Activated CD4-positive, alpha-beta T cell treated with anti-CD3 and anti-CD28 coated beads for 36 hours (primary cell): ENCODE measurements at regions of chr19 and their contacts with region 1.

Region 1: GRCh38 chr19:3035542-3036118 is 6.5 kb upstream of the TLE2 start:
- DNase-seq: peak; percentile 97
- ATAC-seq: peak; percentile 94
- H3K4me3 Mint-ChIP-seq: peak overlapping the region; percentile 83
- H3K27ac Mint-ChIP-seq: peak overlapping the region; percentile 96
- H3K4me1 Mint-ChIP-seq: peaks cover 19% of the 10 kb centered on the region
- H3K27me3 Mint-ChIP-seq: no peaks in the 10 kb centered on the region

Region 2: GRCh38 chr19:2739602-2740313 is 295.9 kb before region 1 on chr19 and contains the start of gene SLC39A3:
- CTCF ChIA-PET with region 1: no interaction called
- POLR2A ChIA-PET with region 1: no interaction called
- intact Hi-C with region 1: loop called in 1 of 2 experiments (anchors 1 kb)
- DNase-seq: peak; percentile 99
- ATAC-seq: peak; percentile 100
- H3K4me3 Mint-ChIP-seq: peak within 1 kb of the TSS; percentile 95
- H3K27ac Mint-ChIP-seq: peak within 1 kb of the TSS; percentile 70
- H3K4me1 Mint-ChIP-seq: peaks cover 14% of the 10 kb centered on the region
- H3K27me3 Mint-ChIP-seq: peaks cover 8% of the 10 kb centered on the region
- total RNA-seq, gene SLC39A3: 26.6 to 46.0 TPM

Region 3: GRCh38 chr19:2944775-2945574 is 90.7 kb before region 1 on chr19 and contains the start of gene ZNF77:
- CTCF ChIA-PET with region 1: interaction called, 23 read pairs
- POLR2A ChIA-PET with region 1: no interaction called
- intact Hi-C with region 1: loop called in 1 of 2 experiments (anchors 1 kb)
- DNase-seq: peak; percentile 99
- ATAC-seq: peak; percentile 100
- H3K4me3 Mint-ChIP-seq: peak within 1 kb of the TSS; percentile 83
- H3K27ac Mint-ChIP-seq: peak within 1 kb of the TSS; percentile 97
- H3K4me1 Mint-ChIP-seq: peaks cover 34% of the 10 kb centered on the region
- H3K27me3 Mint-ChIP-seq: no peaks in the 10 kb centered on the region
- total RNA-seq, gene ZNF77: 4.3 to 4.8 TPM

Region 4: GRCh38 chr19:3053218-3053699 is 17.6 kb after region 1 on chr19:
- CTCF ChIA-PET with region 1: interaction called, 9 read pairs
- POLR2A ChIA-PET with region 1: interaction called, 12 read pairs
- intact Hi-C with region 1: no loop called
- DNase-seq: no peak
- ATAC-seq: no peak
- H3K4me3 Mint-ChIP-seq: no peak overlapping the region
- H3K27ac Mint-ChIP-seq: no peak overlapping the region
- H3K4me1 Mint-ChIP-seq: peaks cover 29% of the 10 kb centered on the region
- H3K27me3 Mint-ChIP-seq: no peaks in the 10 kb centered on the region

Region 5: DNA sequence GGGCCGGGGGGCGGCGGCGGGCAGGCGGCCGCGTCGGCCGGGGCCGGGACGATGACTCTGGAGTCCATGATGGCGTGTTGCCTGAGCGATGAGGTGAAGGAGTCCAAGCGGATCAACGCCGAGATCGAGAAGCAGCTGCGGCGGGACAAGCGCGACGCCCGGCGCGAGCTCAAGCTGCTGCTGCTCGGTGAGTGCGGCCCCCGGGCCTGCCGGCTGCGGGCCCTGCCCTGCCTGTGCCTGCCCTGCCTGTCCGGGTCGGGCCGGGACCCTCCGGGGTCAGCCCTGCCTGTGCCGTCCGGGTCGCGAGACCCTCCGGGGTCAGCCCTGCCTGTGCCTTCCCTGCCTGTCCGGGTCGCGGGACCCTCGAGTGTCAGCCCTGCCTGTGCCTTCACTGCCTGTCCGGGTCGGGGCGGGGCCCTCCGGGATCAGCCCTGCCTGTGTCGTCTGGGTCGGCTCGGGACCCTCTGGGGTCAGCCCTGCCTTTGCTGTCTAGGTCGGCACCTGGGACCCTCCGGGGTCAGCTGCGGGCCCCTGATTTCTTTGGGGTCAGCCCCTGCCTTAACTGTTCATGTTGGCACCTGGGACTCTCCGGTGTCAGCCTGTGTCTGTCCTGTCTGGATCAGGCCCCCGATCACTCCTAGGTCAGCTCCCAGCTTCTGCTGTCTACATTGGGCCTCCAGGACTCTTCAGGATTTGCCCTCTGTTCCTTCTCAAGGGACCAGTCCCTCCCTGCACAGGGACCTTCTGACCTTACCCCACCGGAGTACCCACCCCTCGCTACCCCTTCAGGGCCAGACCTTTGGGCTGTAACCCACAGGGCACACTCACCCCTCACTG is 59.2 kb after region 1 on chr19:
- CTCF ChIA-PET with region 1: interaction called, 3 read pairs
- POLR2A ChIA-PET with region 1: no interaction called
- intact Hi-C with region 1: loop called in 1 of 2 experiments (anchors 1 kb)
- DNase-seq: peak; percentile 68
- ATAC-seq: peak; percentile 45
- H3K4me3 Mint-ChIP-seq: peak overlapping the region; percentile 74
- H3K27ac Mint-ChIP-seq: no peak overlapping the region
- H3K4me1 Mint-ChIP-seq: peaks cover 26% of the 10 kb centered on the region
- H3K27me3 Mint-ChIP-seq: no peaks in the 10 kb centered on the region

Region 6: GRCh38 chr19:3284759-3285646 is 249.4 kb after region 1 on chr19:
- CTCF ChIA-PET with region 1: no interaction called
- POLR2A ChIA-PET with region 1: no interaction called
- intact Hi-C with region 1: loop called in 1 of 2 experiments (anchors 1 kb)
- DNase-seq: peak; percentile 94
- ATAC-seq: peak; percentile 91
- H3K4me3 Mint-ChIP-seq: peak overlapping the region; percentile 51
- H3K27ac Mint-ChIP-seq: no peak overlapping the region
- H3K4me1 Mint-ChIP-seq: peaks cover 12% of the 10 kb centered on the region
- H3K27me3 Mint-ChIP-seq: peaks cover 19% of the 10 kb centered on the region

Region 7: GRCh38 chr19:3500429-3501130 is 464.9 kb after region 1 on chr19 and contains the start of gene DOHH:
- CTCF ChIA-PET with region 1: no interaction called
- POLR2A ChIA-PET with region 1: no interaction called
- intact Hi-C with region 1: loop called in 1 of 2 experiments (anchors 2 kb)
- DNase-seq: peak; percentile 98
- ATAC-seq: peak; percentile 95
- H3K4me3 Mint-ChIP-seq: peak within 1 kb of the TSS; percentile 91
- H3K27ac Mint-ChIP-seq: peak within 1 kb of the TSS; percentile 97
- H3K4me1 Mint-ChIP-seq: peaks cover 26% of the 10 kb centered on the region
- H3K27me3 Mint-ChIP-seq: no peaks in the 10 kb centered on the region
- total RNA-seq, gene DOHH: 9.6 to 15.4 TPM

Region 8: DNA sequence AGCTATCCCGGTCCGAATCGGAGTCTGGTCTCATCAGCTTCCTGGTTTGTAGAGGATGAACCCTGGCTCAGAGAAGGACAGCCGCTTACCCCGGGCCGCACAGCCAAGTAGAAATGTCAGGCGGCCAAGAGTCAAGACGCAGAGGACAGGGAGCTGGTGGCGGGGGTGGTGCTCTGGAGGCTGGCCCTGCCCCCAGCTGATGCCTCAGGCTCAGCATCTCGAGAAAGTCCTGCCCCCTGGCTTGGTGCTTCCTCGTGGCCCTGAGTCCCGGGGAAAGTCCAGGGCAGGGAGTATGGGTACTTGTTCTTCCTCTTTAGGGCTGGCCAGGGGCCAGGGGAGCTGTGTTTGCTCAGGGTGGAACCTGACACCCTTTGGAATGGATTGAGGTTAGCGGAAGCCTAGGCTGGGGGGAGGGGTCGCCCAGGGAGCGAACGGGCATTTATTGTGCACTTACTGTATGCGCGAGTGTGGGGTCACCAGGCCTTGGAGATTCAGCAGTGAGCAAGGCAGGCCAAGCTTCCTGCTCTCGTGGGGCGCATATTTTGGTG is 674.7 kb after region 1 on chr19:
- CTCF ChIA-PET with region 1: no interaction called
- POLR2A ChIA-PET with region 1: no interaction called
- intact Hi-C with region 1: no loop called
- DNase-seq: no peak
- ATAC-seq: no peak
- H3K4me3 Mint-ChIP-seq: no peak overlapping the region
- H3K27ac Mint-ChIP-seq: no peak overlapping the region
- H3K4me1 Mint-ChIP-seq: no peaks in the 10 kb centered on the region
- H3K27me3 Mint-ChIP-seq: peaks cover 2% of the 10 kb centered on the region